Activated CD4-positive, alpha-beta T cell treated with anti-CD3 and anti-CD28 coated beads for 36 hours (primary cell): ENCODE measurements at regions of chr5 and their contacts with region 1.

Region 1: GRCh38 chr5:132714456-132715307 is 22.7 kb downstream of the KIF3A start:
- DNase-seq: no peak
- ATAC-seq: peak; percentile 86
- H3K4me3 Mint-ChIP-seq: peak overlapping the region; percentile 41
- H3K27ac Mint-ChIP-seq: no peak overlapping the region
- H3K4me1 Mint-ChIP-seq: peaks cover 11% of the 10 kb centered on the region
- H3K27me3 Mint-ChIP-seq: no peaks in the 10 kb centered on the region

Region 2: GRCh38 chr5:132622608-132623007 is 92.1 kb before region 1 on chr5:
- CTCF ChIA-PET with region 1: no interaction called
- POLR2A ChIA-PET with region 1: no interaction called
- intact Hi-C with region 1: loop called in 1 of 2 experiments (anchors 1 kb)
- DNase-seq: no peak
- ATAC-seq: no peak
- H3K4me3 Mint-ChIP-seq: no peak overlapping the region
- H3K27ac Mint-ChIP-seq: no peak overlapping the region
- H3K4me1 Mint-ChIP-seq: peaks cover 13% of the 10 kb centered on the region
- H3K27me3 Mint-ChIP-seq: no peaks in the 10 kb centered on the region